GM13977 (cell line): ENCODE measurements at regions of chr11 and their contacts with region 1.

Region 1: GRCh38 chr11:20671856-20672546 is 2.6 kb downstream of the NELL1 start:
- DNase-seq: peak; percentile 52
- CTCF ChIP-seq: peak; percentile 29

Region 2: GRCh38 chr11:21511835-21512440 is 839.9 kb after region 1 on chr11:
- in situ Hi-C with region 1: loop called (anchors 25 kb)
- DNase-seq: peak; percentile 34
- CTCF ChIP-seq: peak; percentile 82